ENCODE measurements at regions of chr18 and their contacts with region 1.

Region 1: DNA sequence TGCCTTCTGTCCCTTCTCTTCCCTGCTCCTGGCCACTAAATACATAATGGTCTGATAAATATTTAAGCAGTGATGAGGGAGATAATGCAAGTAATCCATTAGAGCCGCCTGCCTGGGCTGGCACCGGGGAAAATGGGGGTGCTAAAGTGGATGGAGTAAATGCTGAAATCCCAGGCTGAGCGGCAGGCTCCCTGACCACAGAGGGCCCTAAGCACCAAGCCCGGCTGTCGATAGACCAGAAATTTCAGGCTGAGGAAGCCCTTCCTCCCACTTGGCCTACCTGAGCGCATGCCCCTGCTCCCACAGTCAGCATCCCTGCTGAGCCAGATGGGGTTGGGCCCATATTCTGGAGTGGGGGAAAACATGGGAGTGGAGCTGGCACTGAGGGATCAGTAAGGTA is 197.5 kb upstream of the SKOR2 start:
- DNase-seq: no peak

Region 2: DNA sequence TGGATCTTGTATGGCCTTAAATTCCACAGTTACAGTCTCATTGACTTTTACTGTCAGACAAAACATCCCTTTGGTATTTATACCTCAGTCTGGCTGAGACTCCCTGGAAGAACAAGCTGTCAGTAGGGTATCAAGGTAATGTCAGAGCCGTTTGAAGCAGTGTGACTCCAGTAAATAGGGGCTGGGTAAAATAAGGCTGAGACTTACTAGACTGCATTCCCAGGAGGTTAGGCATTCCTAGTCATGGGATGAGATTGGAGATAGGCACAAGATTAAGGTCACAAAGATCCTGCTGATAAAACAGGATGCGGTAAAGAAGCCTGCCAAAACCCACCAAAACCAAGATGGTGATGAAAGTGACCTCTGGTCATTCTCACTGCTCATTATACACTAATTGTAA is 22.0 kb after region 1 on chr18:
- intact Hi-C with region 1: loop called in 1 of 2 experiments (anchors 1 kb)
- DNase-seq: no peak

Region 3: DNA sequence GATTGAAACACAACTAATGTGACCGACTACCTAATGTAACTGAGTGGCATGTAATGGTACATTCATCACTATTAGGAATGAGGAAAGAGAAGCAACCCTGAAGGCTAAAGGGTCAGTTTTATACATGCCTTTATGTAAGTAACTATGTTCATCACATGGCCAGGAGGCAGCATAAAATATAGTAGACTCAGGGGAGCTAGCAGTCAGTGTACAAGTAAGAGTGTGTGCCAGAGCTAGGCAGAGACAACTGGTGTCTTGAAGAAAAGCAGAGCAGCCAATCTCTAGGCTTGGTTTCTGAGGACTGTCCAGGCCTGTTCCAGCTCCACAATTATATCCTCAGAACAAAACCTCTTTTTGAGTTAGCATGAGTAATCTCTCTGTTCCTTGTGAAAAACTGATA is 463.4 kb after region 1 on chr18:
- intact Hi-C with region 1: no loop called
- DNase-seq: no peak

Region 4: GRCh38 chr18:48238640-48239039 is 789.7 kb after region 1 on chr18:
- intact Hi-C with region 1: no loop called
- DNase-seq: no peak

Region 5: GRCh38 chr18:48580782-48581181 is 1131.8 kb after region 1 on chr18:
- intact Hi-C with region 1: no loop called
- DNase-seq: peak; percentile 88

Measured in posterior vena cava (tissue), 2 donors.